ENCODE measurements at regions of chr14 and their contacts with region 1.

Region 1: DNA sequence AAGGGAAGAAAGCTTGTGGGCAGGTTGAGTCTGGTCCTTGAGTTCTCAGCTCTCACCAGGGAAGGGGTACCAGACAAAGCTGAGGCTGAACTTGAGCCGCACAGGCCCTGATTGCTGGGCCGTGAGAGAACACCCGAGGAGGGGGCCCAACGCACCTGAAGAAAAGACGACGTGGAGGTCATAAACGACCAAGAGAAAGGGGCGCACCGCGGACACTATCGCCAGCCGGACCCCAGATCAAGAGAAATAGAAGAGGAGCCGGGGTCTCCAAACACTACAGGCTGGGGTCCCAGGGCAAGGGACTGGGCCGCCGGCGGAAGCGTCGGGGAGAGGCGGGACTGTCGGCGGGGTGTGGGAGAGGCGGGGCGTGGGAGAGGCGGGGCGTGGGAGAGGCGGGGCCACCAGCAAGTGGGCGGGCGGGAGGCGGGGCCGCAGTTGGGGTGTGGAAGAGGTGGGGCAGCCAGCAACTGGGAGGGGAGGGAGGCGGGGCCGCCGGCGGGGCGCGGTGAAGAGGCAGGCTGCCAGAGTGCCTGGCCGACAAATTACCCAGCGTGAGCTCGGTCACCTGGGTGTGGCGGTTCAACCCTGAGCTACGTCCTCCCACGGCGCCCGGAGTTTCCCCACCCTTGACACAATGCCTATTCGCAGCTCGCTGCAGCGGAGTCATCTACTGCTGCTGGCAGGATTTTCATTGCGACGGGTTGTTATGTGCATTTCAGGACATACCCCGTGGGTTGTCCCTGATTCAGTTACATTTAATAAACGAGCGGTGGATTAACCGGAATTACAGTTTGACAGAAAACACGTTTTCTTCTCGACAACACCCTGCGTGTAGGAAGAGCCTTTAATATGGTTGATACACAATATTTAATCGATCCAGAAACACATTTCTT is 15.5 kb upstream of the NEMF start:
- DNase-seq: peak; percentile 62
- H3K4me3 ChIP-seq: peak overlapping the region; percentile 77
- H3K27ac ChIP-seq: peak overlapping the region; percentile 73
- H3K27me3 ChIP-seq: no peaks in the 10 kb centered on the region
- CTCF ChIP-seq: no peak

Region 2: GRCh38 chr14:49852301-49853157 is 15.5 kb before region 1 on chr14 and contains the start of gene NEMF:
- CTCF ChIA-PET with region 1: interaction called, 119 read pairs
- POLR2A ChIA-PET with region 1: interaction called, 28 read pairs
- DNase-seq: peak; percentile 69
- H3K4me3 ChIP-seq: peak within 1 kb of the TSS; percentile 99
- H3K27ac ChIP-seq: peak within 1 kb of the TSS; percentile 79
- H3K27me3 ChIP-seq: no peaks in the 10 kb centered on the region
- CTCF ChIP-seq: peak; percentile 84
- polyA plus RNA-seq, gene NEMF: 39.8 and 48.6 TPM in 2 replicates

Region 3: DNA sequence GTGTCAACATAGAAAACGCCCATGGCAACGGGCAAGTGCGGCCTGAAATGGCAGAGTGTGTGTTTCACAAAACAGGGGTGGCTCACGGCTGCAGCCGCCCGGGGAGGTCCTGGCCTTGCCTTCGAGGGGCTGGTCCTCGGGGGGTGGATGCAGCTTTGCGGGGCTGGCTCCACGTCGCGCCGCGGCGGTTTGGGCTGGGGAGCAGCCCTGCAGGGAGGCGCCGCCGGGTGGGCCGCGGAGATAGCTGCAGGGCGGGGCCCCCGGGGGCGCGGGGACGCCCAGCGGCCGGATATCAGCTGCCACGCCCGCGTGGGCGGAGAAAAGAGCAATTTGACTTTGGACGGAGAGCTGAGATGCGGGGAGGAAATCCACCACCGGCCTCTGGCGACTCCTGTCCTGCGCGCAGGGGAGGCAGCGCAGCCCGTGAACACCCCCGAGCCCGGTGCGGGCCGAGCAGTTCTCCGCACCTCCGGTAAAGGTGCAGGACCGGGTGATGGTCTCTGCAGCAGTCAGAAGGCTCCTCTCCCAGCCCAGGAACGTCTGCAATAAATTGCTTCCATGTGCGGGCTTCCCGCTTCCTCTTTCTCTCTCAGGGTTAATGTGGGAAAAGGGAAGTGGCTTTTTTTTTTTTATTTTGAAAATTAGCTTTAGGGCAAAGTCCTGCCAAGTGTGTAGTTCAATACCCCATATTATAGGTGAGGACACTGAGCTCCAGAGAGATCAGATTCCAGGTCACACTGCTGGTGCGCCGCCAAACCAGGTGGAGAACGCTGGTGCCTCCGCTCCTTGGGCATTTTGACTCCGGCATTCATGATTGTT is 135.3 kb after region 1 on chr14:
- CTCF ChIA-PET with region 1: interaction called, 14 read pairs
- POLR2A ChIA-PET with region 1: interaction called, 4 read pairs
- DNase-seq: no peak
- H3K4me3 ChIP-seq: peak overlapping the region; percentile 58
- H3K27ac ChIP-seq: peak overlapping the region; percentile 39
- H3K27me3 ChIP-seq: no peaks in the 10 kb centered on the region
- CTCF ChIP-seq: peak; percentile 12; the same call in 1 of the 2 replicates

Region 4: DNA sequence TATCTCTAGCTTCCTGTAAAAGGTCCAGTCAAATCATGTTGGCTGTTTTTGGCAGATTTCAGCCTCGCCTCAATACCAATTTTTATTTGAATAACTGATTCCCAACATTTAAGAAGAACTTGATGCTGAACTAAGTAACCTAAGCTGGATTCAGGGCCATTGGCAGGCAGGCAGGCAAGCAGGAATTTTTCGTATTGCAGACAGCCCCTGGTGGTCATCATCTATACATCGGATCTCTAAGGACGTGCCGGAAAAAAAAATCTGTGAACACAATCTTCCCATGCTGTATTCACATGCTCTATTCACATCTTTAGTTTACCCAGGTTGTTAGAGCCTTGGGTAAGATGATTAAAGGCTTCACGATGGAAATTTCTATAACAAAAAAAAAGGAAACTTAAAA is 241.3 kb after region 1 on chr14:
- CTCF ChIA-PET with region 1: interaction called, 256 read pairs
- POLR2A ChIA-PET with region 1: interaction called, 6 read pairs
- DNase-seq: peak; percentile 10
- H3K4me3 ChIP-seq: no peak overlapping the region
- H3K27ac ChIP-seq: no peak overlapping the region
- H3K27me3 ChIP-seq: no peaks in the 10 kb centered on the region
- CTCF ChIP-seq: peak; percentile 52

Region 5: GRCh38 chr14:50311975-50312733 is 444.1 kb after region 1 on chr14 and contains the starts of genes DMAC2L and L2HGDH:
- CTCF ChIA-PET with region 1: no interaction called
- POLR2A ChIA-PET with region 1: interaction called, 11 read pairs
- DNase-seq: peak; percentile 62
- H3K4me3 ChIP-seq: peak within 1 kb of the TSS; percentile 88
- H3K27ac ChIP-seq: peak within 1 kb of the TSS; percentile 93
- H3K27me3 ChIP-seq: no peaks in the 10 kb centered on the region
- CTCF ChIP-seq: no peak
- polyA plus RNA-seq, gene DMAC2L: 8.1 and 12.6 TPM in 2 replicates
- polyA plus RNA-seq, gene L2HGDH: 2.8 and 3.6 TPM in 2 replicates